MCF 10A (cell line): ENCODE measurements at regions of chr1 and their contacts with region 1.

Region 1: GRCh38 chr1:99685516-99686180 is 39.7 kb downstream of the PALMD start:
- DNase-seq: peak; percentile 92
- H3K4me3 Mint-ChIP-seq: no peak overlapping the region
- H3K27ac Mint-ChIP-seq: no peak overlapping the region
- H3K4me1 Mint-ChIP-seq: peaks cover 24% of the 10 kb centered on the region
- H3K27me3 Mint-ChIP-seq: no peaks in the 10 kb centered on the region
- CTCF ChIP-seq: peak; percentile 54

Region 2: DNA sequence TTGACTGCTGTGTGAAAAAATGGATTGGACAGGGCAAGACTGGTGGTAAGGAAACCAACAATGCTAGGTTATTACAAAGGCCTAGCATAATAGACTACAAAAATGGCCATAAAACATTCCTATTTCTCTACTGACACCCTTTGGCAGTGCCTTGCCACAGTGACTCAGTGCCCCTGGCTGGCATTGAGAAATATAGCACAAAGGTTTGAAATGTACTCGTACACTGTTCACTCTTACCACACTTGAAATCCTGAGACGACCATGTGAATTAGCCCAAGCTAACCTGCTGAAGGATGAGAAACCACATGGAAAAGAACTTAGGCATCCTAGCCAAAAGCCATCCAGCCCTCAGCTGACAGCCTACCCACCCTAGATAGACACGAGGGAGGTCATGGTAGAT is 189.6 kb before region 1 on chr1:
- CTCF ChIA-PET with region 1: interaction called, 4 read pairs
- POLR2A ChIA-PET with region 1: interaction called, 3 read pairs
- intact Hi-C with region 1: loop called (anchors 1 kb)
- DNase-seq: peak; percentile 77
- H3K4me3 Mint-ChIP-seq: no peak overlapping the region
- H3K27ac Mint-ChIP-seq: peak overlapping the region; percentile 46
- H3K4me1 Mint-ChIP-seq: peaks cover 15% of the 10 kb centered on the region
- H3K27me3 Mint-ChIP-seq: no peaks in the 10 kb centered on the region
- CTCF ChIP-seq: no peak

Region 3: GRCh38 chr1:99580451-99580850 is 105.2 kb before region 1 on chr1:
- CTCF ChIA-PET with region 1: interaction called, 14 read pairs
- POLR2A ChIA-PET with region 1: interaction called, 16 read pairs
- intact Hi-C with region 1: loop called (anchors 1 kb)
- DNase-seq: peak; percentile 90
- H3K4me3 Mint-ChIP-seq: peak overlapping the region; percentile 33
- H3K27ac Mint-ChIP-seq: peak overlapping the region; percentile 96
- H3K4me1 Mint-ChIP-seq: peaks cover 20% of the 10 kb centered on the region
- H3K27me3 Mint-ChIP-seq: no peaks in the 10 kb centered on the region
- CTCF ChIP-seq: no peak

Region 4: GRCh38 chr1:99662581-99663208 is 23.0 kb before region 1 on chr1:
- CTCF ChIA-PET with region 1: interaction called, 11 read pairs
- POLR2A ChIA-PET with region 1: interaction called, 76 read pairs
- intact Hi-C with region 1: no loop called
- DNase-seq: peak; percentile 98
- H3K4me3 Mint-ChIP-seq: no peak overlapping the region
- H3K27ac Mint-ChIP-seq: peak overlapping the region; percentile 95
- H3K4me1 Mint-ChIP-seq: peaks cover 29% of the 10 kb centered on the region
- H3K27me3 Mint-ChIP-seq: no peaks in the 10 kb centered on the region
- CTCF ChIP-seq: no peak

Region 5: DNA sequence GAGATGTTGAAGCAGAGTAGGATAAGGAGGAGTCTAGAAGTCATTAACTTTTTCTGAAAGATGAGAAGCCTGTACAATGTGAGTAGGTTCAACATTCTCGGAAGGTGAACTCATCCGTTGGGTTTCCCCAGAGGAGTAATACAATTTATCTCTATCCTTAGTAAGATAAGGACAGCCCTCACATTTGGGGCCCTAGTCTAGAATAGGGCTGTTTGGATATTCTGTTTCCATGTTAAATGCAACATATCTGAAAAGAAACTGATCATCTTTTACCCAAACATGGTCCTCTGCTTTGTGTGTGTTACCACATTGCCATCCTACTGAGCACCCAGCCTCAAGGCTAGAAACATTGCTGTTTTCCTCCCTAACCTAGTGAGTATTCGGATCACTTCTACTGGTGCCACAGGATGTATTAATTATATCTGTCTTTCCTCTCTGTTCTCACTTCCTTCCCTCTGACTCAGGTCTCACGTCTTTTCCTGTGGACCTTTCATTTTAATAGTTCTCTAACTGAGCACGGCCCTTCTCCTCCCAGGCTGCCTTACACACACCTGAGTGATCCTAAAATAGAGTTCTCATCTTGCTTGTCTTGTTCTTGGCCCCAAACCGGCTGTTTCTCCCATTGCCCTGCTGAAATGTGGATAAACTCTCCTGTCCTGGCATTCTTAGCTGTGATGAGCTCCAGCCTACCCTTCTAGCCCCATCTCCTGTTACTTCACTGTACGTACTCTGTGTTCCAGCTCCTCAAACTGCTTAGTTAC is 758.3 kb after region 1 on chr1:
- CTCF ChIA-PET with region 1: no interaction called
- POLR2A ChIA-PET with region 1: no interaction called
- intact Hi-C with region 1: no loop called
- DNase-seq: no peak
- H3K4me3 Mint-ChIP-seq: no peak overlapping the region
- H3K27ac Mint-ChIP-seq: no peak overlapping the region
- H3K4me1 Mint-ChIP-seq: no peaks in the 10 kb centered on the region
- H3K27me3 Mint-ChIP-seq: no peaks in the 10 kb centered on the region
- CTCF ChIP-seq: no peak